GM12878 (cell line): ENCODE measurements at regions of chr16 and their contacts with region 1.

Region 1: GRCh38 chr16:1363501-1364041 is 11.8 kb downstream of the GNPTG start:
- DNase-seq: no peak
- ATAC-seq: peak; percentile 100
- H3K4me3 ChIP-seq: no peak overlapping the region
- H3K27ac ChIP-seq: no peak overlapping the region
- H3K4me1 ChIP-seq: no peaks in the 10 kb centered on the region
- H3K27me3 ChIP-seq: no peaks in the 10 kb centered on the region
- CTCF ChIP-seq: peak; percentile 87 to 89 (median 88)
- EP300 ChIP-seq: no peak
- POLR2A ChIP-seq: no peak
- RAD21 ChIP-seq: peak; percentile 47

Region 2: DNA sequence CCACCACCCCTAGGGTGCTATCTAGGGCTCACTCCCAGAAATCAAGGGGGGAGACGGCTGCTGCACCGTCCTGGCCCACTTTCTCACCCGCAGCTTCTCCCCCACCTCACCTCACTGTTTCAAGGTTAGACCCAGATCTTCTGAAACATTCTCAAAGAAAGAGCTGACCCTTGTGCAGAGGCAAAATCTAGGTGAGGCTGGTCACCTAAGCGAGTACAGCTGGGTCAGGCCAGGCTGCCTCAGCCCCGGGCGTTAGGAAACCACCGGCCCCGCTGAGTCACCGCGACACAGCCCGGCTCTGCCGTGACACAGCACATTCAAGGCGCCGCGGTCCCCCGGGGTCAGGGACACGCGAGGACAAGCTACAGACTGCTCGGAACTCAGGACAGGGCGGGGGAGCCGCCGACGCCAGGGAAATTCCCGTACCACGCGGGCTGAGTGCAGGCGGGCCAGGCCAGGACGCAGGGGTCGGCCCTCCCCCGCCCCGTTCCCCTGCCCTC is 15.3 kb after region 1 on chr16:
- CTCF ChIA-PET with region 1: interaction called, 10 read pairs
- POLR2A ChIA-PET with region 1: no interaction called
- RAD21 ChIA-PET with region 1: no interaction called
- SMC1A ChIA-PET with region 1: no interaction called
- in situ Hi-C with region 1: no loop called
- intact Hi-C with region 1: no loop called
- DNase-seq: no peak
- ATAC-seq: peak; percentile 85
- H3K4me3 ChIP-seq: peak overlapping the region; percentile 73
- H3K27ac ChIP-seq: peak overlapping the region; percentile 78
- H3K4me1 ChIP-seq: peaks cover 8% of the 10 kb centered on the region; the same call in 1 of the 2 replicates
- H3K27me3 ChIP-seq: no peaks in the 10 kb centered on the region
- CTCF ChIP-seq: no peak
- EP300 ChIP-seq: no peak
- POLR2A ChIP-seq: no peak
- RAD21 ChIP-seq: no peak

Region 3: DNA sequence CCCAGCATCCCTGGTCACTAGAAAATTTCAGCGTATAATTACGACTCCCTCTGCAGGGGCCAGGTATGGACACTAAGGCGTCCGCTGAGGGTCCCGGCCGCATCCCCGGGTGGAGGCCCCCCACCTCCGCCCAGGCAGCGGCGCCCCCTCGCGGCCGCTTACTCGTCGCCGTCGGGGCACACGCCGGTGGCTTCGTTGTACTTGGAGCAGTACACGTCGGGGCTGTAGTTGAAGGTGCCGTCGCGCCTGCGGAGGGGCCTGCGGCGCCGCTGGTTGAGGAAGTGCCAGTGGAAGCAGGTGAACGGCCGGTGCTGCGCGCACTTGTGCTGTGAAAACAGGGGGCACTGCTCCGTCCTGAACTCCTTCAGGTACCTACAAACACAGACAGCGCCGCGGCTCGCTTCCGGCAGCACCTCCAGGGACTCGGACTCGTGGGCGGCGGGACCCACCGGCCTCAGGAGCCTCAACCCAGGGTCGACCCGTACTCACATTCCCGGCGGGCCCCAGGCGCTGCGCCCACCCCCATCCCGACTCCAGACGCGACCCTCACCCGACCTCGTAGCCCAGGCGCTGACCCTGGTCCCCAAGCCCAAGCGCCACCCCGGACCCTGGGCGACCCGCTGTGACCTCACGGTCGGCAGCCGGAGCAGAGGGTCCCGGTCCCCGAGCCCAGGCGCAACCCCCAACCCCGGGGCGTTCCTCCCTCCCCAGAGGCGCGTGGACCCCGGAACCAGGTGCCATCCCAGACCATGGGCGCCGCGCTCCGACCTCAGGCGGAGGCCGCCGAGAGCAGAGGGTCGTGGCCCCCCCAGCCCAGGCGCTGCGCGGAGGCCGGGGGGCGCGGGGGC is 50.3 kb after region 1 on chr16:
- CTCF ChIA-PET with region 1: interaction called, 11 read pairs
- POLR2A ChIA-PET with region 1: no interaction called
- RAD21 ChIA-PET with region 1: interaction called, 5 read pairs
- SMC1A ChIA-PET with region 1: interaction called, 3 read pairs
- in situ Hi-C with region 1: no loop called
- intact Hi-C with region 1: no loop called
- DNase-seq: peak; percentile 8
- ATAC-seq: peak; percentile 82
- H3K4me3 ChIP-seq: peak overlapping the region; percentile 98
- H3K27ac ChIP-seq: peak overlapping the region; percentile 76
- H3K4me1 ChIP-seq: no peaks in the 10 kb centered on the region
- H3K27me3 ChIP-seq: no peaks in the 10 kb centered on the region
- CTCF ChIP-seq: peak; percentile 62 to 70 (median 64)
- EP300 ChIP-seq: no peak
- POLR2A ChIP-seq: peak; percentile 72
- RAD21 ChIP-seq: peak; percentile 50